ENCODE measurements at regions of chr5 and their contacts with region 1.

Region 1: GRCh38 chr5:80487829-80488721 is at the start of gene FAM151B:
- DNase-seq: peak; percentile 93 to 98
- H3K4me3 ChIP-seq: peak within 1 kb of the TSS; percentile 66
- H3K27ac ChIP-seq: peak within 1 kb of the TSS; percentile 76
- H3K4me1 ChIP-seq: peaks cover 48% of the 10 kb centered on the region
- H3K27me3 ChIP-seq: no peaks in the 10 kb centered on the region
- CTCF ChIP-seq: peak; percentile 48; the same call in 1 of the 2 replicates
- total RNA-seq, gene FAM151B: 1.4 and 1.7 TPM in 2 replicates

Region 2: GRCh38 chr5:80453366-80453765 is 34.7 kb before region 1 on chr5:
- CTCF ChIA-PET with region 1: no interaction called
- POLR2A ChIA-PET with region 1: no interaction called
- intact Hi-C with region 1: no loop called
- DNase-seq: no peak
- H3K4me3 ChIP-seq: no peak overlapping the region
- H3K27ac ChIP-seq: no peak overlapping the region
- H3K4me1 ChIP-seq: no peaks in the 10 kb centered on the region
- H3K27me3 ChIP-seq: no peaks in the 10 kb centered on the region
- CTCF ChIP-seq: no peak

Region 3: GRCh38 chr5:80569961-80570786 is 82.1 kb after region 1 on chr5 and contains the start of gene ANKRD34B:
- CTCF ChIA-PET with region 1: no interaction called
- POLR2A ChIA-PET with region 1: no interaction called
- intact Hi-C with region 1: loop called (anchors 10 kb)
- DNase-seq: peak in 1 of 2 experiments; percentile 37
- H3K4me3 ChIP-seq: no peak within 1 kb of the TSS
- H3K27ac ChIP-seq: no peak within 1 kb of the TSS
- H3K4me1 ChIP-seq: peaks cover 10% of the 10 kb centered on the region
- H3K27me3 ChIP-seq: no peaks in the 10 kb centered on the region
- CTCF ChIP-seq: no peak
- total RNA-seq, gene ANKRD34B: 0.15 and 0.26 TPM in 2 replicates